ENCODE measurements at regions of chr3 and their contacts with region 1.

Region 1: GRCh38 chr3:69324362-69325025 is 61.4 kb downstream of the FRMD4B start:
- DNase-seq: peak; percentile 18
- H3K4me3 Mint-ChIP-seq: no peak overlapping the region
- H3K27ac Mint-ChIP-seq: no peak overlapping the region
- H3K4me1 Mint-ChIP-seq: peaks cover 43% of the 10 kb centered on the region
- H3K27me3 Mint-ChIP-seq: no peaks in the 10 kb centered on the region

Region 2: GRCh38 chr3:69370156-69370883 is 45.8 kb after region 1 on chr3:
- CTCF ChIA-PET with region 1: no interaction called
- intact Hi-C with region 1: loop called (anchors 2 kb)
- DNase-seq: peak; percentile 41
- H3K4me3 Mint-ChIP-seq: peak overlapping the region; percentile 41
- H3K27ac Mint-ChIP-seq: no peak overlapping the region
- H3K4me1 Mint-ChIP-seq: peaks cover 23% of the 10 kb centered on the region
- H3K27me3 Mint-ChIP-seq: peaks cover 8% of the 10 kb centered on the region

Region 3: GRCh38 chr3:69425261-69425660 is 100.8 kb after region 1 on chr3:
- CTCF ChIA-PET with region 1: interaction called, 5 read pairs
- intact Hi-C with region 1: loop called (anchors 1 kb)
- DNase-seq: peak; percentile 57
- H3K4me3 Mint-ChIP-seq: no peak overlapping the region
- H3K27ac Mint-ChIP-seq: no peak overlapping the region
- H3K4me1 Mint-ChIP-seq: peaks cover 5% of the 10 kb centered on the region
- H3K27me3 Mint-ChIP-seq: no peaks in the 10 kb centered on the region

Region 4: DNA sequence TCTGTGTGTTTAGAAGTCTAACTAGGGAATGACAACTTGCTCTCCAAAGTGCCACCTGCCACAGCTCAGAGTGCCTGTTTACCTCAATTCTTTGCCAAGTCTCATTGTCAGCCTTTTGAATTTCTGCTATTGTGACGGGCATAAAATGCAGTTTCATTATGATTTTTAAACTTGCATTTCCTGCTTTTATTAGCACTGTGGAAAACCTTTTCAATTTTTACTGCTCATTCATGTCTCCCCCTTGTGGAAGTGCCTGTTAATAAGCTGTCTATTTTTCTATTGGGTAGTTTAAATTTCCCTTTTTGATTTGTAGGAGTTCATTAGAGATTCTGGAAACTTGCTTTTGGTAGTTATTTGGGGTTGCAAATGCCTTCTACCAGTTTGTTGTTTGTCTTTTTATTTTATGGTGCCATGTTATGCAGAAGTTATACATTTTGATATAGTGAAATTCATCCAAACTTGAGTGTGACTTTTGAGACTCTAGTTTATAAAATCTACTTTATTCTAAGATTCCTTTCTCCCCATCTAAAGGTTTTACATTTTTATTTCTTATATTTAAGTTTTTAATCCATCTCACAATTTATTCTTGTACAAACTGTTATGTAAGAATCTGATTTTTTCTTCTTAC is 115.3 kb after region 1 on chr3:
- CTCF ChIA-PET with region 1: interaction called, 5 read pairs
- intact Hi-C with region 1: loop called (anchors 1 kb)
- DNase-seq: peak; percentile 15
- H3K4me3 Mint-ChIP-seq: no peak overlapping the region
- H3K27ac Mint-ChIP-seq: peak overlapping the region; percentile 48
- H3K4me1 Mint-ChIP-seq: peaks cover 58% of the 10 kb centered on the region
- H3K27me3 Mint-ChIP-seq: peaks cover 5% of the 10 kb centered on the region

Region 5: DNA sequence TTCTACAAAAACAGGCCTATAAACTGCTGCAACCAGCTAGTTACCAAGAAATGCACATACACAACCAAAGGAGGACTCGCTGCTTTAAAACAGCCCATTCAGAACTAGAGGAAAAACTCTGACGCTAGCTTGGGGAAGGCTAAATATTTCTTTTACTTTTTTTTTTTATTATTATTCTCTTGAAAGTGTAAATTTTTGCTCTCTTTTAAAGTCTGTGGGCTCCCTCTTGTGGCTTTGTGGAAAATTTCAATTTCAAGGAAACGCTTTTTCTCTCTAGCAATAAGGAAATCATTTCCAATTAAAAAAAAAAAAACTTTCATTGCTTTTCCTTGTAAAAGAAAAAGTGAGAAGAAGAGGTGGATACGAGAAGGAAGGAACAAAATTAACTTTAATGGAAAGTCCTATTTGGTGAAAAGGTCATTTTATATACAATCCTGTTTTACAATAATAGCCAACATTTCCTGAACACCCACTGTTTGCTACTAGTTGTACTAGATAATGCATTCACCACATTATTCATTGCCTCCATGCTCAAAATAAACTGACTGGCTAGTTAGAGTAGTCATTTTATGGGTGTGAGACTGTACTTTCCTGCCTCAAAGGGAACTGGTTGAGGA is 623.9 kb after region 1 on chr3:
- CTCF ChIA-PET with region 1: no interaction called
- intact Hi-C with region 1: loop called (anchors 5 kb)
- DNase-seq: no peak
- H3K4me3 Mint-ChIP-seq: no peak overlapping the region
- H3K27ac Mint-ChIP-seq: no peak overlapping the region
- H3K4me1 Mint-ChIP-seq: no peaks in the 10 kb centered on the region
- H3K27me3 Mint-ChIP-seq: no peaks in the 10 kb centered on the region

Measured in activated naive CD4-positive, alpha-beta T cell treated with anti-CD3 and anti-CD28 coated beads for 36 hours (primary cell).